PC-9 (cell line): ENCODE measurements at regions of chr12 and their contacts with region 1.

Region 1: GRCh38 chr12:94149119-94149780 is 873 bp downstream of the PLXNC1 start:
- DNase-seq: no peak
- H3K4me3 ChIP-seq: no peak overlapping the region
- H3K27ac ChIP-seq: no peak overlapping the region
- H3K4me1 ChIP-seq: no peaks in the 10 kb centered on the region
- H3K27me3 ChIP-seq: peaks cover 44% of the 10 kb centered on the region
- CTCF ChIP-seq: no peak

Region 2: DNA sequence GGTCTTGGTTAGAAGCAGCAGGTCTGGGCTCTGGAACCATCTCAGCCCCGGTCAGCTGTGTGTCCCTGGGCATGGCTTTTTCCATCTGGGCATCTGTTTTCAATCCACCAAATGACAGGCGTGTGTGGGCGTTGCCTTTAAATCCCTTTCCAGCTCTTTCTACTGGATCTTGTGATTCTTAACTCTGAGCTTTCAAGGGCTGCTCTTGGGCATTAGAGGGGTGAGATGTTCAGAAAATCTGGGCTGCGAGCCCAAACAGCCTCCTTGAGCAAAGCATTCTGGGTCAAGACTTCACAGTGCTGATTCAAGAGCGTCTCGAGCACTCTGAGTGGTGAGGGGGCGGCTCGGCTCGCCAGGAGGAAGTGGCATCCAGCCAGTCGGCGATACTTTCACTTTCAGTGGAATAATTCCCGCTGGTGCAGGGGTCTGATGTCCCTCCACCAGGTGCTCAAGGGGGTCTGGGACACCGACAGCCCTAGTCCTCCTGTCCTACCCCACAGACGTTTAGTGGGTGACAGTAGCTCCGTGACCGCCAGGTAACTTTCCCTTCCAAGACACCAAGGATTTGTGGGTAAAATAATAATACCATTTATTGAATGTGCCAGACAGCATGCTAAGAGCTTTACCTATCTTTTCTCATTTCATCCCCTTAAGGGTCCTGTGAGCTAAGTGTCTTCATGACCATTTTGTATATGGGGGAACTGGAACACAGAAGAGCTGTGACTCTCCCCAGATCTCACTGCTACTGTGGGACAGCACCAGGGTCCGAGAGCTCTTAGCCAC is 113.2 kb after region 1 on chr12:
- CTCF ChIA-PET with region 1: no interaction called
- POLR2A ChIA-PET with region 1: no interaction called
- intact Hi-C with region 1: no loop called
- DNase-seq: peak in 1 of 2 experiments; percentile 56
- H3K4me3 ChIP-seq: peak overlapping the region; percentile 42; the same call in 1 of the 2 replicates
- H3K27ac ChIP-seq: no peak overlapping the region
- H3K4me1 ChIP-seq: no peaks in the 10 kb centered on the region
- H3K27me3 ChIP-seq: 0 out of 2 replicates have a peak, but pooled peaks cover 3% of the 10 kb centered on the region
- CTCF ChIP-seq: no peak

Region 3: DNA sequence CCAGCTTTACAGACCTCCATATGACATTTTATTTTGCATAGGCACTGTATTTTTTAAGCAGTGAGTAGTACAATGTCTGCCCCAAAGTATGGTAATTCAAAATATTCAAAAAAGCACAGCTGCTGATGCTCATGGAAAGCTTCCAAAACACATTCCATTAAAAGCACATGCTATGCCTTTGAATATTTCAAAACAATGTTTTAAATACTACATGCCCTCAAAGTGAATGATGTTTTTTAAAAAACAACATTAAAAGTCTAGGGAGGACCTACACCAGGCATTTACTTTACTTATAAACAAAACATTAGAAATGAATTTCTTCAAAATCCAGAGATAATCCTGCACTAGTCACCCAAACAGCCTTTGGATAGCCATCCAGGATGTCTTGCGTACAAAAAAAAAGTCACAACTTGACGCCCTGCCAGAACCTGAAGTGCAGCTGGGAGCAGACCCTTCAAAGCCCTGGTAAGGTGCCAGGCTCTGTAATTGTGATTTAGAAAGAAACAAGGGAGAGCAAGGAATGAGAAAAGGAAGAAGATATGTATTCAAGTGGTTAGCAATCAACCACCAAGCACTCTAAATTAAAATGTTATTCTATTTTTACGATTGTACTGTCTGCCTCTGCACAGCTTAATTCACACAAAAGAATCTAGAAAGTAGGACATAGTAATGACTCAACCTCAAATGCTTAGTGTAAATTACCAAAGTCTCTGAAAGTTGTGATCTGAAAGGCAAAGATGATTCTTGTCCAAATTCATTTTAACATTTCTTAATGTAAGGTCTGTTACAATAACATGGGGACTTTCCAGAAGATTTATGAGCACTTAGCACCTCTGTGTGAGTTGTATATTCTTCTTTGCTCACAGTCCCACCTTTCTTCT is 278.5 kb after region 1 on chr12:
- CTCF ChIA-PET with region 1: no interaction called
- POLR2A ChIA-PET with region 1: no interaction called
- intact Hi-C with region 1: no loop called
- DNase-seq: no peak
- H3K4me3 ChIP-seq: no peak overlapping the region
- H3K27ac ChIP-seq: no peak overlapping the region
- H3K4me1 ChIP-seq: no peaks in the 10 kb centered on the region
- H3K27me3 ChIP-seq: no peaks in the 10 kb centered on the region
- CTCF ChIP-seq: no peak

Region 4: DNA sequence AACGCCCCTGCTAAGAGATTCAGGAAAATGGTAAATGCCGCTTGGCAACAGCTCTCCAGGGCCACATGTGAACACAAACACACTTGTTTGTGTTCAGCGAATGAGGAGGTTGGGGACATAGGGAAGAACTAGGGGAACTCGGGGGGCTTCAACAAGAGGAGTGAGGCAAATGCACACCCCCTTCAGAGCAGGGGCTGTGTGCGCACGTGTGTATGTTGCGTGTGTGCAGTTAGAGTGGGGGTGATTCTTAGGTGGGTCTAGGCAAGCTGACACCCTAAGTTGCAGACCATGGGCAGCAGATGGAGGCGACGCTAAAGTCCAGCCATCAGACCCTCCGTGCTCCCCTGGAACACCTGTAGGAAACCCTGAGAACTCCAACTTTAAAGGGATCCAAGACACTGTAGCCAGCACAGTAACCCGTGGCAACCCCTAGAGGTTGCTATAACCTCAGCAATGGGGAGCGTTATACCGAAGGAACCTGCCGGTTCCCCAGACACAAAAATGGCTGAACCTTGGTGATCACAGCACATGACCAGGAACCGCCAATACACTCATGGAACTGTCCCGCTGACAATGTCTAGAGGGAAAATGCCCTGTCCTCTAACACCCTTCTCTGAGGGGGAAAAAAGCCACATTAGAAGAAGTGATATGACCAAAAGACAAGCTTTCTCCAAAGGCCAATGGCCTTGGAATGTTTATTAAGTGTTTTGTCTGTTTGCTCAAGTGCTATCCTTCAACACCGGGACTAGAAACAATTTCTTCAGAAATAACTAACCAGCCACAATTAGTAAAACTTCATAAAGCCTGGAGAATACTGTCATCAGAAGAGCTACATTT is 396.9 kb after region 1 on chr12:
- CTCF ChIA-PET with region 1: no interaction called
- POLR2A ChIA-PET with region 1: no interaction called
- intact Hi-C with region 1: no loop called
- DNase-seq: peak; percentile 56
- H3K4me3 ChIP-seq: no peak overlapping the region
- H3K27ac ChIP-seq: no peak overlapping the region
- H3K4me1 ChIP-seq: peaks cover 5% of the 10 kb centered on the region; the same call in 1 of the 2 replicates
- H3K27me3 ChIP-seq: no peaks in the 10 kb centered on the region
- CTCF ChIP-seq: peak; percentile 73

Region 5: GRCh38 chr12:95003213-95003920 is 854.1 kb after region 1 on chr12 and contains the start of gene NDUFA12:
- CTCF ChIA-PET with region 1: interaction called, 21 read pairs
- POLR2A ChIA-PET with region 1: no interaction called
- intact Hi-C with region 1: no loop called
- DNase-seq: peak; percentile 92 to 93
- H3K4me3 ChIP-seq: peak within 1 kb of the TSS; percentile 63
- H3K27ac ChIP-seq: peak within 1 kb of the TSS; percentile 70
- H3K4me1 ChIP-seq: peaks cover 10% of the 10 kb centered on the region; the same call in 1 of the 2 replicates
- H3K27me3 ChIP-seq: no peaks in the 10 kb centered on the region
- CTCF ChIP-seq: no peak
- total RNA-seq, gene NDUFA12: 86.4 and 108 TPM in 2 replicates